Esophagus squamous epithelium (tissue), 5 donors: ENCODE measurements at regions of chr2 and their contacts with region 1.

Region 1: GRCh38 chr2:55168221-55169154 is 63.6 kb downstream of the CLHC1 start:
- DNase-seq: no peak
- H3K4me3 ChIP-seq: no peak overlapping the region
- H3K27ac ChIP-seq: peak overlapping the region in 3 of 4 donors; percentile 45 to 71 (median 70)
- H3K4me1 ChIP-seq: peaks cover 0 to 45% (median 9%) of the 10 kb centered on the region in 3 donors
- H3K27me3 ChIP-seq: no peaks in the 10 kb centered on the region
- CTCF ChIP-seq: peak; percentile 60 to 87 (median 72)
- POLR2A ChIP-seq: no peak

Region 2: DNA sequence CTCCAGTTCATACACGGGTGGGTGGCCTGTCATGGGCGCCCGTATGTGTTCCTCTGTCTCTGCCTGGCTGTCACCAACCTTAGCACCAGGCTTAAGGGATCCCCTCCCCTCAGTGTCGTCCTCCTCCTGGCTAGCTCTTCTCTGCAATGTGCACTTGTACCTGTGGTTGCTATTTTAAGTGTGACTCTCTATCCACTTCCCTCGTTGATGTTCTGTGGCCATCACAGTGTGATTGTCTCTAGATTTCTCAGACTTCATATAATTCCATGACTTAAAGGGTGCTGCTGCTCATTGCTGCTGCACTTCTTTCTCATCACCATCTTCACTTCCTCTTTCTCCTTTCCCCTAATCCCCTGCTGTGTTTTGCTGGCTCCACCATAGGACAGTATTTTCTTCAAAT is 301.6 kb before region 1 on chr2:
- intact Hi-C with region 1: no loop called
- DNase-seq: no peak
- H3K4me3 ChIP-seq: no peak overlapping the region
- H3K27ac ChIP-seq: no peak overlapping the region
- H3K4me1 ChIP-seq: no peaks in the 10 kb centered on the region
- H3K27me3 ChIP-seq: no peaks in the 10 kb centered on the region
- CTCF ChIP-seq: no peak
- POLR2A ChIP-seq: no peak

Region 3: GRCh38 chr2:55050133-55050994 is 118.1 kb before region 1 on chr2 and contains the start of gene RTN4:
- intact Hi-C with region 1: loop called (anchors 2 kb)
- DNase-seq: peak; percentile 95
- H3K4me3 ChIP-seq: peak within 1 kb of the TSS; percentile 81 to 98 (median 94)
- H3K27ac ChIP-seq: peak within 1 kb of the TSS; percentile 99 to 100 (median 100)
- H3K4me1 ChIP-seq: peaks cover 22 to 54% (median 23%) of the 10 kb centered on the region in 3 donors
- H3K27me3 ChIP-seq: no peaks in the 10 kb centered on the region
- CTCF ChIP-seq: peak in 4 of 6 experiments; percentile 4 to 41 (median 36)
- POLR2A ChIP-seq: peak in 3 of 4 donors; percentile 99 to 100 (median 99)
- total RNA-seq, gene RTN4: 95.8 to 179 (median 129) TPM

Region 4: DNA sequence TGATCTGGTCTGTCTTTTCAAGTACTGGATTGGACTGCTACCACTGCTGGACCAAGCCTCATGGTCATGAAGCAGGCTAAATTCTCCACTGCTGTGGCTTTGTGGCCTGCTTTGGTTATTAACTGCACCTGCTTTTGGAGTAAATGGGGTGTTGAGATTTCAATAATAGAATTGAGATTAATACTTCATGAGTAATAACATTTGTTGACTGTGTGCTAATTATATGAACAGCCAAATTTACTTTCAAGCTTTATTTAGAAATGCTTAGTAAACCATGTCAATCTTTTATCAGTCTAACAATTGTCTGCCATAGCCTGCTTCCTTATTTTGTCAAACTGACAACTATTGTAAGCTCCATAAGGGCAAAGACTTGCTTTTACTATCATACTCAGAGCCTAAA is 127.9 kb after region 1 on chr2:
- intact Hi-C with region 1: no loop called
- DNase-seq: no peak
- H3K4me3 ChIP-seq: no peak overlapping the region
- H3K27ac ChIP-seq: no peak overlapping the region
- H3K4me1 ChIP-seq: peaks cover 0 to 12% (median 3%) of the 10 kb centered on the region in 3 donors
- H3K27me3 ChIP-seq: no peaks in the 10 kb centered on the region
- CTCF ChIP-seq: no peak
- POLR2A ChIP-seq: no peak